CD8-positive, alpha-beta T cell (primary cell): ENCODE measurements at regions of chr3 and their contacts with region 1.

Region 1: DNA sequence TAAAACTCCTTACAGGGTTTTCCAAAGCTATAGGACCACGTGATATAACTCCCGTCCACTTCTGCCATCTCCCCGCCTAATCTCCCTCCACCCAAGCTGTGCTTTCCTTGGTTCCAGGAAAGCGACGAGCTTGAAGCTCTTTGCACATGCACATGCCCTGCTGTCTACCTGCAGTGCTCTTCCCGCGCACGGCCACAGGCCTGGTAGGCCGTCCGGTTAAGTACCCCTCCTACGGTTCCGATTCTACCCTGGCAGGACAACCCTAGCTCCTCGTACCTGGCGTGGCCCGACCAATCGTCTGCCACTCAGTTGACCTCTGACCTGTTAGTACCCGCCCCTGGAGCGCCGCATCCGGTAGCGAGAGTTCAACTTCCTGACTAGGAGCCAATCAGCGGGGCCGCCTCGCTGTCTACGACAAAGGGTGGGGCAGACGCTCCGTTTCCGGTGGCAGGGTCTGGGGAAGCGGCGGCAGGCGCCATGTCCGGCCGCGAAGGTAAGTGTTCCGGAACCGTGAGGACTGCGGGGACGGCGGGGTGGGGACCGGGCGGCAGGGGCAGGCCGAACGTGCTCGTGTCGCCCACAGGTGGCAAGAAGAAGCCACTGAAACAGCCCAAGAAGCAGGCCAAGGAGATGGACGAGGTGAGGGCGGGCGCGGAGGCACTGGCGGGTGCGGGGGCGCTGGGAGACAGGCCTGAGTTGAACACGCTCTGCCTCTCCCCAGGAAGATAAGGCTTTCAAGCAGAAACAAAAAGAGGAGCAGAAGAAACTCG is at the starts of genes CCDC51 and TMA7:
- DNase-seq: peak; percentile 95 to 99 (median 98)
- ATAC-seq: peak; percentile 91
- H3K4me3 ChIP-seq: peak within 1 kb of the TSS; percentile 82 to 86
- H3K4me3 Mint-ChIP-seq: peak within 1 kb of the TSS; percentile 89
- H3K27ac ChIP-seq: peak within 1 kb of the TSS; percentile 95 to 98
- H3K27ac Mint-ChIP-seq: peak within 1 kb of the TSS; percentile 97
- H3K4me1 ChIP-seq: peaks cover 21% of the 10 kb centered on the region
- H3K4me1 Mint-ChIP-seq: peaks cover 37% of the 10 kb centered on the region
- H3K27me3 ChIP-seq: no peaks in the 10 kb centered on the region
- H3K27me3 Mint-ChIP-seq: no peaks in the 10 kb centered on the region
- CTCF ChIP-seq: no peak
- total RNA-seq, gene CCDC51: 2.9 to 4.7 TPM
- total RNA-seq, gene TMA7: 279 to 297 TPM

Region 2: GRCh38 chr3:48240711-48241491 is 199.1 kb before region 1 on chr3 and contains the start of gene ZNF589:
- CTCF ChIA-PET with region 1: interaction called, 8 read pairs
- POLR2A ChIA-PET with region 1: interaction called, 3 read pairs
- intact Hi-C with region 1: loop called in 1 of 2 experiments (anchors 1 kb)
- DNase-seq: peak; percentile 91 to 97 (median 94)
- ATAC-seq: peak; percentile 97
- H3K4me3 ChIP-seq: peak within 1 kb of the TSS; percentile 66 to 90
- H3K4me3 Mint-ChIP-seq: peak within 1 kb of the TSS; percentile 92
- H3K27ac ChIP-seq: peak within 1 kb of the TSS; percentile 62 to 85
- H3K27ac Mint-ChIP-seq: peak within 1 kb of the TSS; percentile 93
- H3K4me1 ChIP-seq: peaks cover 23% of the 10 kb centered on the region
- H3K4me1 Mint-ChIP-seq: peaks cover 28% of the 10 kb centered on the region
- H3K27me3 ChIP-seq: no peaks in the 10 kb centered on the region
- H3K27me3 Mint-ChIP-seq: no peaks in the 10 kb centered on the region
- CTCF ChIP-seq: peak; percentile 31
- total RNA-seq, gene ZNF589: 18.9 to 20.9 TPM

Region 3: DNA sequence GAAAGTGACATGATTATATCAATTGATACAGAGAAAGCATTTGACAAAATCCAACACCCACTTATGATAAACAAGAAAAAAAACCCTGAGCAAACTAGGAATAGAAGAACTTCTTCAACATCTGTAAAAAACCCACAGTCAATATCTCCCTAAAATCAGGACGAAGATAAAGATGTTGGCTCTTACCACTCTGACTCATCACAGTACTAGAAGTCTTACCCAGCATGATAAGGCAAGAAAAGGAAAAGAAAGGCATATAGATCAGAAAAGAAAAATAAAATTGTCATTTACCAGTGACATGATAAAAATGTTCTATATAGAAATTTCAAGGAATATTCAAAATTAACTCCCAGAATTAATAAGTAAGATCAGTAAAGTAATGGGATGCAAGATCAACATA is 75.2 kb before region 1 on chr3:
- CTCF ChIA-PET with region 1: no interaction called
- POLR2A ChIA-PET with region 1: no interaction called
- intact Hi-C with region 1: no loop called
- DNase-seq: no peak
- ATAC-seq: no peak
- H3K4me3 ChIP-seq: no peak overlapping the region
- H3K4me3 Mint-ChIP-seq: no peak overlapping the region
- H3K27ac ChIP-seq: no peak overlapping the region
- H3K27ac Mint-ChIP-seq: no peak overlapping the region
- H3K4me1 ChIP-seq: no peaks in the 10 kb centered on the region
- H3K4me1 Mint-ChIP-seq: no peaks in the 10 kb centered on the region
- H3K27me3 ChIP-seq: no peaks in the 10 kb centered on the region
- H3K27me3 Mint-ChIP-seq: no peaks in the 10 kb centered on the region
- CTCF ChIP-seq: no peak

Region 4: GRCh38 chr3:48428088-48428829 is 11.7 kb before region 1 on chr3:
- CTCF ChIA-PET with region 1: interaction called, 20 read pairs
- POLR2A ChIA-PET with region 1: interaction called, 4 read pairs
- intact Hi-C with region 1: no loop called
- DNase-seq: no peak
- ATAC-seq: no peak
- H3K4me3 ChIP-seq: no peak overlapping the region
- H3K4me3 Mint-ChIP-seq: peak overlapping the region; percentile 68
- H3K27ac ChIP-seq: no peak overlapping the region
- H3K27ac Mint-ChIP-seq: no peak overlapping the region
- H3K4me1 ChIP-seq: peaks cover 6% of the 10 kb centered on the region
- H3K4me1 Mint-ChIP-seq: peaks cover 14% of the 10 kb centered on the region
- H3K27me3 ChIP-seq: no peaks in the 10 kb centered on the region
- H3K27me3 Mint-ChIP-seq: peaks cover 5% of the 10 kb centered on the region
- CTCF ChIP-seq: no peak

Region 5: GRCh38 chr3:48500656-48501055 is 60.7 kb after region 1 on chr3:
- CTCF ChIA-PET with region 1: interaction called, 156 read pairs
- POLR2A ChIA-PET with region 1: interaction called, 7 read pairs
- intact Hi-C with region 1: no loop called
- DNase-seq: no peak
- ATAC-seq: no peak
- H3K4me3 ChIP-seq: no peak overlapping the region
- H3K4me3 Mint-ChIP-seq: no peak overlapping the region
- H3K27ac ChIP-seq: no peak overlapping the region
- H3K27ac Mint-ChIP-seq: peak overlapping the region; percentile 45
- H3K4me1 ChIP-seq: peaks cover 23% of the 10 kb centered on the region
- H3K4me1 Mint-ChIP-seq: peaks cover 29% of the 10 kb centered on the region
- H3K27me3 ChIP-seq: no peaks in the 10 kb centered on the region
- H3K27me3 Mint-ChIP-seq: no peaks in the 10 kb centered on the region
- CTCF ChIP-seq: no peak

Region 6: GRCh38 chr3:48543271-48543866 is 103.4 kb after region 1 on chr3:
- CTCF ChIA-PET with region 1: interaction called, 142 read pairs
- POLR2A ChIA-PET with region 1: interaction called, 3 read pairs
- intact Hi-C with region 1: loop called (anchors 1 kb)
- DNase-seq: no peak
- ATAC-seq: no peak
- H3K4me3 ChIP-seq: no peak overlapping the region
- H3K4me3 Mint-ChIP-seq: no peak overlapping the region
- H3K27ac ChIP-seq: no peak overlapping the region
- H3K27ac Mint-ChIP-seq: no peak overlapping the region
- H3K4me1 ChIP-seq: no peaks in the 10 kb centered on the region
- H3K4me1 Mint-ChIP-seq: peaks cover 4% of the 10 kb centered on the region
- H3K27me3 ChIP-seq: no peaks in the 10 kb centered on the region
- H3K27me3 Mint-ChIP-seq: no peaks in the 10 kb centered on the region
- CTCF ChIP-seq: no peak

Region 7: GRCh38 chr3:49057268-49057667 is 617.3 kb after region 1 on chr3:
- CTCF ChIA-PET with region 1: no interaction called
- POLR2A ChIA-PET with region 1: no interaction called
- intact Hi-C with region 1: no loop called
- DNase-seq: no peak
- ATAC-seq: no peak
- H3K4me3 ChIP-seq: no peak overlapping the region
- H3K4me3 Mint-ChIP-seq: no peak overlapping the region
- H3K27ac ChIP-seq: no peak overlapping the region
- H3K27ac Mint-ChIP-seq: no peak overlapping the region
- H3K4me1 ChIP-seq: no peaks in the 10 kb centered on the region
- H3K4me1 Mint-ChIP-seq: peaks cover 9% of the 10 kb centered on the region
- H3K27me3 ChIP-seq: no peaks in the 10 kb centered on the region
- H3K27me3 Mint-ChIP-seq: no peaks in the 10 kb centered on the region
- CTCF ChIP-seq: no peak

Region 8: GRCh38 chr3:49093853-49094767 is 654.1 kb after region 1 on chr3 and contains the start of gene QRICH1:
- CTCF ChIA-PET with region 1: interaction called, 4 read pairs
- POLR2A ChIA-PET with region 1: interaction called, 4 read pairs
- intact Hi-C with region 1: loop called in 1 of 2 experiments (anchors 1 kb)
- DNase-seq: peak; percentile 90 to 98 (median 95)
- ATAC-seq: peak; percentile 77
- H3K4me3 ChIP-seq: peak within 1 kb of the TSS; percentile 76 to 95
- H3K4me3 Mint-ChIP-seq: peak within 1 kb of the TSS; percentile 91
- H3K27ac ChIP-seq: peak within 1 kb of the TSS; percentile 81 to 90
- H3K27ac Mint-ChIP-seq: peak within 1 kb of the TSS; percentile 99
- H3K4me1 ChIP-seq: peaks cover 33% of the 10 kb centered on the region
- H3K4me1 Mint-ChIP-seq: peaks cover 37% of the 10 kb centered on the region
- H3K27me3 ChIP-seq: no peaks in the 10 kb centered on the region
- H3K27me3 Mint-ChIP-seq: no peaks in the 10 kb centered on the region
- CTCF ChIP-seq: peak; percentile 67
- total RNA-seq, gene QRICH1: 232 to 246 TPM